SK-N-SH (cell line): ENCODE measurements at regions of chr18 and their contacts with region 1.

Region 1: GRCh38 chr18:8478166-8478967 is 130.9 kb upstream of the RAB12 start:
- DNase-seq: peak; percentile 77
- H3K4me3 ChIP-seq: no peak overlapping the region
- H3K27ac ChIP-seq: no peak overlapping the region
- H3K4me1 ChIP-seq: peaks cover 0 to 6% of the 10 kb centered on the region in 2 experiments; a peak in 1 of 4 replicates
- H3K27me3 ChIP-seq: no peaks in the 10 kb centered on the region
- CTCF ChIP-seq: peak; percentile 72
- EP300 ChIP-seq: no peak
- RAD21 ChIP-seq: peak; percentile 50

Region 2: GRCh38 chr18:7272311-7273049 is 1205.9 kb before region 1 on chr18:
- CTCF ChIA-PET with region 1: interaction called, 87 read pairs
- POLR2A ChIA-PET with region 1: no interaction called
- DNase-seq: peak; percentile 71
- H3K4me3 ChIP-seq: no peak overlapping the region; a peak in 1 of 4 replicates
- H3K27ac ChIP-seq: peak overlapping the region in 1 of 2 experiments; percentile 31; a peak in 1 of 4 replicates
- H3K4me1 ChIP-seq: peaks cover 0 to 7% of the 10 kb centered on the region in 2 experiments; a peak in 1 of 4 replicates
- H3K27me3 ChIP-seq: no peaks in the 10 kb centered on the region
- CTCF ChIP-seq: no peak
- EP300 ChIP-seq: no peak
- RAD21 ChIP-seq: peak; percentile 86

Region 3: DNA sequence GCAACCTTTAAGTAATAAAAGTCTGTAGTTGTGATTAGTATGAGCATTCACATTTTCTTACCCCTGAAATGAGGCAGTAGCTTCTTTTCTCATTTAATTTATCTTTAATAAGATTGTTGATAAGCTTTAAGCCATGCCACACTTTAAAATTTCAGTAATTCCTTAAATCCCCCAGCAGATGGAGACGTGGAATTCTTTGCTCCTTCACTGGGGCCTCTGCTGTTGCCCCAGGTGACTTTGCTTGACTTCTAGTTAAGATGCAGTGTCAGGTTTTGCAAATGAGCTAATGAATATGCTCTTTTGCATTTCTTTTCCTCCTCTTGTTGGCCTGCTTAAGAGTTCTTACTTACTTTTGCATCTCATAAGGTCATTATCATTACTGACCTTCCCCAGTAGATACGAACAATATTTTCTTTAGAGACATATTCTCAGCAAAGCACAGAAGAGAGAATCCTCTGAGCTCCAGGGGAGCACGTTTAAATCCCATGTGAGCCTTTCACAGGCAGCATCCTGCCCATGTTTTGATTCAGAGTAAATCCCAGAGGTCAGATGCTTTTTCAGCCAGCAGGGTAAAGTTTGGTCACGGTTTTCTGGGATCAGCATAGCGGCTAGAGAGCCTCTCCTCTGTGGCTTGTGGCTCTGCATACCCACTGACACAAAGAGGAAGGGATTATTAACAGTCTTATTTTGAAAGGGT is 688.4 kb before region 1 on chr18:
- CTCF ChIA-PET with region 1: interaction called, 33 read pairs
- POLR2A ChIA-PET with region 1: no interaction called
- DNase-seq: peak; percentile 33
- H3K4me3 ChIP-seq: no peak overlapping the region; a peak in 1 of 4 replicates
- H3K27ac ChIP-seq: no peak overlapping the region
- H3K4me1 ChIP-seq: peaks cover 0 to 3% of the 10 kb centered on the region in 2 experiments; a peak in 1 of 4 replicates
- H3K27me3 ChIP-seq: no peaks in the 10 kb centered on the region
- CTCF ChIP-seq: peak; percentile 58
- EP300 ChIP-seq: no peak
- RAD21 ChIP-seq: peak; percentile 75

Region 4: DNA sequence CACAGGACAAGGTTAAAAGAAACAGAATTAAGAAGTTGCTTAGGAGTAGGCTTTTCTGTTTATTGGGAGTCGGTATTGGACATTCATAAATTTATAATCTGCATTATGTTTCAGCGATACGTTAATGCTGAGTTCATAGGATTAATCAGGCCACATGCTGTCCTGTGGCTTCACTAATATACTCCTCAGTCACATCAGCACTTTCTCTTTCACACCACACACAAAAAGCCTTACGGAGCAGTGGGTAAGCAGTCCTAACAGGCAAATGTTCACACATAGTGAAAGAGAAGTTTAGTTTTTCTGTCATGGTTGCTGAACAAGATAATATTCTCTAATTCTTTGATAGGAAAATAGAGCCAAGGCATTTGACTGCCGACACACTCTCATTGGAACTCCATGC is 280.9 kb before region 1 on chr18:
- CTCF ChIA-PET with region 1: no interaction called
- POLR2A ChIA-PET with region 1: no interaction called
- DNase-seq: no peak
- H3K4me3 ChIP-seq: no peak overlapping the region
- H3K27ac ChIP-seq: no peak overlapping the region
- H3K4me1 ChIP-seq: peaks cover 0 to 9% of the 10 kb centered on the region in 2 experiments; a peak in 1 of 4 replicates
- H3K27me3 ChIP-seq: no peaks in the 10 kb centered on the region
- CTCF ChIP-seq: no peak
- EP300 ChIP-seq: no peak
- RAD21 ChIP-seq: no peak

Region 5: GRCh38 chr18:8389391-8390340 is 88.7 kb before region 1 on chr18:
- CTCF ChIA-PET with region 1: interaction called, 22 read pairs
- POLR2A ChIA-PET with region 1: no interaction called
- DNase-seq: peak; percentile 72
- H3K4me3 ChIP-seq: peak overlapping the region in 1 of 2 experiments; percentile 47; a peak in 1 of 4 replicates
- H3K27ac ChIP-seq: peak overlapping the region in 1 of 2 experiments; percentile 50; a peak in 1 of 4 replicates
- H3K4me1 ChIP-seq: peaks cover 0 to 6% of the 10 kb centered on the region in 2 experiments; a peak in 1 of 4 replicates
- H3K27me3 ChIP-seq: no peaks in the 10 kb centered on the region
- CTCF ChIP-seq: peak; percentile 81
- EP300 ChIP-seq: no peak
- RAD21 ChIP-seq: peak; percentile 92

Region 6: DNA sequence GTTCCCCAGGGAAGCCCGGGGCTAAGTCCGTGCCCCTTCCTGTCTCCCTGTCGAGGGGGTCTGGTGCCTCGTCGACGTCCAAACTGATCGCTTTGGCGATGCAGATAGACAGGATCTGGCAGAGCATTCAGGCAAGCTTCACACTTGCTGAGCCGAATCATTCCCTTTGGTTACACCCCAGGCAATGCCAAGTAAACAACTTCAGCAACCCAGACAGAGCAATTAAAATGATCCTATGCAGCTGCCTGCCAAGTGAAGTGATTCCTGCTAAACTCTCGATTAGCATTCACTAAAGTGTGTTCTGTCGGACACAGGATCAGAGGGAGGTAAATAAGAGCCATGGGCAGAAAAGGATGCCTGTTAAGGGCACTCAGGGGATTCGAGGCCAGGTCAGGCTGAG is 22.7 kb after region 1 on chr18:
- CTCF ChIA-PET with region 1: interaction called, 14 read pairs
- POLR2A ChIA-PET with region 1: no interaction called
- DNase-seq: no peak
- H3K4me3 ChIP-seq: no peak overlapping the region
- H3K27ac ChIP-seq: no peak overlapping the region
- H3K4me1 ChIP-seq: peaks cover 0 to 17% of the 10 kb centered on the region in 2 experiments; a peak in 1 of 4 replicates
- H3K27me3 ChIP-seq: no peaks in the 10 kb centered on the region
- CTCF ChIP-seq: no peak
- EP300 ChIP-seq: no peak
- RAD21 ChIP-seq: no peak